ENCODE measurements at regions of chr13 and their contacts with region 1.

Region 1: DNA sequence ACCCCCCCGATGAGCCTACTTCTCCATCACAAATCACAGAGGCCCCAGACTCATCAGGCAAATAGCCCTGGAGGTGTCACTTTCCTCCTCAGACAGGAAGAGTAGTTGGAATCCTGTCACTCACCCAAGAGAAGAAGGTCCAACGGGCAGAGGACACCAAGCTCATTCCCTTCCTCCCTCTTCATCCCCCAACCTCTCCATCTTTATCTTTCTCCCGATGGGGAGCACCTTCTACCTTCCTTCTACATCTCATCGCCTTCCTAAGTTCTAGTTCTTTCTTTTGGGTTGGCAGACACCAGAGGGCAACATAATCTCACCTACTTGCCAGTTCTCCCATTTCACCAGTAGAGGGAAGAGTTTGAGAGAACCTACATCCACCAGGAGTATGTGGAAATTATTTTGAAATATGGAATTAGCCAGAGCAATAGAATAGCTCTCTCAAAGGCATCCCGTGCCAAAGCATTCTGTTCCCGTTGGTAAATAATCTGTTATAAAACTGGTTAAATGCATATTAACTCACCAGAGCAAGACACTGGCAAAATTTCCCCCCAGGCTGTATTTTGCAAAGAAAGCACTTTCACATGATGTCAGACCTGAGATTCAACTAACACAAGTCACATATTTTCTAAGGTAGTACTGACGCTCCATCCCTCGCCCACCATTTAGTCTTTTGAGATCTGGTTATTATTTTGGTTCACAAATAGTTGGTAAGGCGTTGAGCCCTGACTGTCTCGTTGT is 55.0 kb downstream of the ZIC5 start:
- DNase-seq: no peak
- ATAC-seq: peak; percentile 65 to 70

Region 2: DNA sequence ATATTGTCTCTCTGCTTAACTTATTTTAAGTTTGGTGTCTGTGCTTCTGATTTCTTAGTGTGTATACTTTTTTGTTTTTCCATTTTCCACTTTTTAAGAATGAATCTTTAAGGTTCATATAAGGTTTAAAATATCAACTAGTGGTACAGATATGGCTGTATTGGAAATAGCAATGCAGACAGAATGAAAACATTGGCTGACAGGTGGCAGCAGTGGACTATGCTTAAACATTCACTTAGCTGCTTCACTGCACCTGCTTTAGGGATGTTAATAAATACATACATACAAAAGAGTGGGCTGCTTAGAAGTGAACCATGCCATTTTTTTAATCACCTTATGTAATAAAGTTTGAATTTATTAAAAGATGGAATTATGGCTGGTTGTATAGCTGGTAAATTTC is 388.0 kb before region 1 on chr13:
- intact Hi-C with region 1: no loop called
- DNase-seq: no peak
- ATAC-seq: no peak

Region 3: GRCh38 chr13:99656092-99656745 is 260.3 kb before region 1 on chr13:
- intact Hi-C with region 1: loop called in 1 of 2 experiments (anchors 5 kb)
- DNase-seq: peak; percentile 73
- ATAC-seq: peak; percentile 63 to 64

Region 4: GRCh38 chr13:99677116-99677951 is 239.2 kb before region 1 on chr13:
- intact Hi-C with region 1: no loop called
- DNase-seq: no peak
- ATAC-seq: no peak

Region 5: DNA sequence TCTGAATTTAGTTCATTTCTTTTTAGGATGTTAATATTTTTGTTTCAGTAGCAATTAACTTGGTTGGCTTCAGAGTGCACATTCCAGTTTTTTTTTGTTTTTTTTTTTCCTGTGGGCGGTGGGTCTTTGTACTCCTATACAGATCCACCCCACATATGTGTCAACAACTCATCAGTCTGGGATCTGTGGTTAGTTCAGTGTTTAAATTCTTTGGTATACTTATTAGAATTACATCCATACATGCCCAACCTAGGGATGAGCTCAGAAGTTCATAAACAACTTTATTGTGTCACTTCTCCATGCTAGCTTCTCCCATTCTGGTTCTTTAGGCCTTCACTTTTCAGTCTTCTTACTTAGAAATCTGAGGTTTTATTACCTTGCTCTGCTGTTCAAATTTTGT is 223.3 kb after region 1 on chr13:
- intact Hi-C with region 1: no loop called
- DNase-seq: no peak
- ATAC-seq: no peak

Region 6: GRCh38 chr13:100235311-100235901 is 318.9 kb after region 1 on chr13:
- intact Hi-C with region 1: loop called (anchors 5 to 10 kb)
- DNase-seq: no peak
- ATAC-seq: no peak

Region 7: GRCh38 chr13:100514788-100515409 is 598.4 kb after region 1 on chr13:
- intact Hi-C with region 1: loop called (anchors 2 to 10 kb)
- DNase-seq: peak; percentile 85
- ATAC-seq: peak; percentile 85 to 94